CD4-positive, alpha-beta T cell (primary cell): ENCODE measurements at regions of chr1 and their contacts with region 1.

Region 1: DNA sequence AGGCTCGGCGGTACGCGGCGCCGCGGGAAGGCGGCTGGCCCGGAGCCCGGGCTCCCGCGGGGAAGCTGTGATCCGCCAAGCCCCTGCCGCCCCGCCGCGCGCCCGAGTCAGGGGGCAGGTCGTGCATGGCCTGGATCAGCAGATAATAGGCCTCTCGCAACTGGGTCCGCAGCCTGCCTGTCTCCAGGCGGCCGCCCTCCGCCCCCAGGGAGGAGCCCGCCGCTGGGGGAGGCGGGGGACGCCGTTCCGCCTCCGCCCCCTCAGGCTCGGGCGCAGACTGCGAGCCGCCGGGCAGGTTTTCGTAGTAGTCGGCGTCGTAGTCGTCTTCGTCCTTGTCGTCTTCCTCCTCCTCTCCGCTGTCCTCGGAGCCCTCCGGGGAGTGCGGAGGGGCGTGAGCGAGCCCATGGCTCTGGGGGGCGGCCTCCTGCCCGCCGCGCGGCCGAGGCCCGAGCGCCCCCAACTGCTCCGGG is at the start of gene SYDE2:
- DNase-seq: peak; percentile 65 to 92 (median 79)
- ATAC-seq: peak; percentile 81
- H3K4me3 ChIP-seq: peak within 1 kb of the TSS; percentile 66
- H3K4me3 Mint-ChIP-seq: peak within 1 kb of the TSS; percentile 98
- H3K27ac ChIP-seq: peak within 1 kb of the TSS; percentile 38 to 95
- H3K27ac Mint-ChIP-seq: peak within 1 kb of the TSS; percentile 97
- H3K4me1 ChIP-seq: peaks cover 16% of the 10 kb centered on the region
- H3K4me1 Mint-ChIP-seq: peaks cover 47% of the 10 kb centered on the region
- H3K27me3 ChIP-seq: no peaks in the 10 kb centered on the region
- H3K27me3 Mint-ChIP-seq: peaks cover 36% of the 10 kb centered on the region
- CTCF ChIP-seq: no peak
- total RNA-seq, gene SYDE2: 6.4 to 6.9 TPM

Region 2: DNA sequence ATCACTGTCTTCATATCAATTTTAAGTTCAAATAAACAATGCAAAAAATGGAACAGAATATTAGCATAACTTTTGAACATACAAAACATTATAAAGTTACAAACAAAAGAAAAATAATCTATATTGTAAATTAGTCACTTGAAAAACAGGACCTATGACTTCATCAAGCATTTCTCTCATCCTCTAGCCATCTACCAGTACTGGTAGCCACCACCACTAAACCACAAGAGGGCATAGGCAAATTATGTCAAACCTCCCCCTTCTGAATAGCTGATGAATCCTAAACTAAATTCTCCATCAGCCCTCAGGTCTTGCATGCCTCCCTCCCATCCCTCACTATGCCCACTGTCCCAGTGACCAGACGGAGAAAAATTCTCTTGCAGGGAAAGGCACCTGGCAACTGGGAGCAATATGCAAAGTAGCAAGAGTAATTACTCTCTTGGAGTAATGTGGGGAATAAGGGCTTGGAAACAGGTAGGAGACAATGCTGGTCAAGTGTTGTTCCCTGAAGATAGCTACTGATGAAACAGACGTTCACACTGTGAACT is 547.7 kb before region 1 on chr1:
- CTCF ChIA-PET with region 1: no interaction called
- POLR2A ChIA-PET with region 1: no interaction called
- intact Hi-C with region 1: no loop called
- DNase-seq: peak in 2 of 14 experiments; percentile 5 to 11
- ATAC-seq: no peak
- H3K4me3 ChIP-seq: no peak overlapping the region
- H3K4me3 Mint-ChIP-seq: no peak overlapping the region
- H3K27ac ChIP-seq: no peak overlapping the region
- H3K27ac Mint-ChIP-seq: no peak overlapping the region
- H3K4me1 ChIP-seq: no peaks in the 10 kb centered on the region
- H3K4me1 Mint-ChIP-seq: no peaks in the 10 kb centered on the region
- H3K27me3 ChIP-seq: no peaks in the 10 kb centered on the region
- H3K27me3 Mint-ChIP-seq: no peaks in the 10 kb centered on the region
- CTCF ChIP-seq: no peak

Region 3: DNA sequence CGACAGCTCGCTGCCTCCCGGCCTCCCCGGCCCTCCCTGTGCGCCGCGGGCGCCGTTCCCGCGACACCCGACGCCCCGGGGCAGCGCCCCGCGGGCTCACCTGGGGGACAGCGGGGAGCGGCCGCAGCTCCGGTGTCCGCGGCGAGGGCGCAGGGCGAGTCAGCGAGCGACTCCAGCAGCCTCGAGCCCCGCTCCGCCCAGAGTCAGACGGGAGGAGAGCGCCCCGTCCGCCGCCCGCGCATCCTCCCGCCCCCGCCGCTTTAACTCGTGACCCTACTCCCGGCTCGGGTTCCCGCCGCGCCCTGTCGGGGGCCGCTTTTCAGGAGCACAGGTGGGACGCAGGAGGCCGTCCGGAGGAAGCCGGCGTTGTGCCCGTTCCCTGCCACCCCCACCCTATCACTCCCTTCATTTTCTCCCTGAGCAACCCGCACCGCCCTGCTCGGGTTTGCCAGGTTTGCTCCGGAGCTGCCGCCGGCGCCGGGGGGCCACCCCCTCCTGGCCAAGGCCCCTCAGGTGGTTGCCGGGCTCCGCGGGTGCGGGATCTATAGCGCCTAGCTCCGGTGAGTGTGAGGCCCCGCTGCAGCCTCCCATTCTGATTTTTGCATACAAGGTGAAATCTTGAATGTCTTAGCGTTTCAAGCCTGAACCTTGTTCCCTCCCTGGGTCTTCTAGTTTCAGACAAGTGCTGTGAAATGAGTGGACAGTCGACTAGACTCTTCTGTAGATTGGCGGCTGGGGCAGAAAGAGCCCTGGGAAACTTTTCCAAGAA is 152.4 kb before region 1 on chr1 and contains the start of gene MCOLN3:
- CTCF ChIA-PET with region 1: no interaction called
- POLR2A ChIA-PET with region 1: no interaction called
- intact Hi-C with region 1: loop called in 1 of 2 experiments (anchors 5 kb)
- DNase-seq: peak in 11 of 14 experiments; percentile 14 to 60 (median 36)
- ATAC-seq: peak; percentile 63
- H3K4me3 ChIP-seq: peak within 1 kb of the TSS; percentile 49
- H3K4me3 Mint-ChIP-seq: peak within 1 kb of the TSS; percentile 72
- H3K27ac ChIP-seq: no peak within 1 kb of the TSS
- H3K27ac Mint-ChIP-seq: no peak within 1 kb of the TSS
- H3K4me1 ChIP-seq: peaks cover 26% of the 10 kb centered on the region
- H3K4me1 Mint-ChIP-seq: peaks cover 33% of the 10 kb centered on the region
- H3K27me3 ChIP-seq: peaks cover 33 to 56% of the 10 kb centered on the region in 2 experiments
- H3K27me3 Mint-ChIP-seq: peaks cover 66% of the 10 kb centered on the region
- CTCF ChIP-seq: no peak
- total RNA-seq, gene MCOLN3: 0.14 to 0.22 TPM

Region 4: GRCh38 chr1:85061711-85062424 is 139.0 kb before region 1 on chr1:
- CTCF ChIA-PET with region 1: no interaction called
- POLR2A ChIA-PET with region 1: interaction called, 3 read pairs
- intact Hi-C with region 1: loop called in 1 of 2 experiments (anchors 5 kb)
- DNase-seq: peak; percentile 69 to 95 (median 73)
- ATAC-seq: peak; percentile 99
- H3K4me3 ChIP-seq: peak overlapping the region; percentile 50
- H3K4me3 Mint-ChIP-seq: peak overlapping the region; percentile 89
- H3K27ac ChIP-seq: no peak overlapping the region
- H3K27ac Mint-ChIP-seq: peak overlapping the region; percentile 43
- H3K4me1 ChIP-seq: peaks cover 10% of the 10 kb centered on the region
- H3K4me1 Mint-ChIP-seq: peaks cover 10% of the 10 kb centered on the region
- H3K27me3 ChIP-seq: peaks cover 0 to 3% of the 10 kb centered on the region in 2 experiments
- H3K27me3 Mint-ChIP-seq: peaks cover 28% of the 10 kb centered on the region
- CTCF ChIP-seq: no peak

Region 5: DNA sequence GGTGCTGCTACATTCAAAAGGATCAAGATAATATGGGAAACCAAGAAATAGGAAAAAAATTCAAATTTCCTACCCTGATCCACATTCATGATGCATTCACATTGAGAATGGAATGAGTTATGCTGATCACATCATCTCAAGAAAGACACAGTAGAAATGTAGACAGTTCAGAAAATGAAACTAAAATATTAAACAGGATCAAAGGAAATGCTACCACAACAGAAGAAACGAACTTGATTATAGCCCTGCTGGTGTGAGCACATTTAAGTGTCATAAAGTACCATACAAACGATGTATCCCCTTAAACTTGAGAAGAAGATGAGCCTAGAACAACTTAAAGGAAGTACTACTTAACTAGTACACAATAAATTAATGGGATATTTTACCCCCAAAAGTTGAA is 21.4 kb before region 1 on chr1:
- CTCF ChIA-PET with region 1: interaction called, 3 read pairs
- POLR2A ChIA-PET with region 1: interaction called, 7 read pairs
- intact Hi-C with region 1: loop called in 1 of 2 experiments (anchors 2 kb)
- DNase-seq: peak in 3 of 14 experiments; percentile 59 to 77 (median 59)
- ATAC-seq: peak; percentile 95
- H3K4me3 ChIP-seq: peak overlapping the region; percentile 2
- H3K4me3 Mint-ChIP-seq: peak overlapping the region; percentile 64
- H3K27ac ChIP-seq: no peak overlapping the region
- H3K27ac Mint-ChIP-seq: peak overlapping the region; percentile 5
- H3K4me1 ChIP-seq: no peaks in the 10 kb centered on the region
- H3K4me1 Mint-ChIP-seq: peaks cover 14% of the 10 kb centered on the region
- H3K27me3 ChIP-seq: no peaks in the 10 kb centered on the region
- H3K27me3 Mint-ChIP-seq: no peaks in the 10 kb centered on the region
- CTCF ChIP-seq: no peak

Region 6: GRCh38 chr1:85259118-85259911 is 58.4 kb after region 1 on chr1 and contains the start of gene C1orf52:
- CTCF ChIA-PET with region 1: interaction called, 12 read pairs
- POLR2A ChIA-PET with region 1: interaction called, 15 read pairs
- intact Hi-C with region 1: loop called (anchors 2 kb)
- DNase-seq: peak; percentile 92 to 99 (median 96)
- ATAC-seq: peak; percentile 93
- H3K4me3 ChIP-seq: peak within 1 kb of the TSS; percentile 88
- H3K4me3 Mint-ChIP-seq: peak within 1 kb of the TSS; percentile 99
- H3K27ac ChIP-seq: peak within 1 kb of the TSS; percentile 47 to 81
- H3K27ac Mint-ChIP-seq: peak within 1 kb of the TSS; percentile 95
- H3K4me1 ChIP-seq: peaks cover 21% of the 10 kb centered on the region
- H3K4me1 Mint-ChIP-seq: peaks cover 41% of the 10 kb centered on the region
- H3K27me3 ChIP-seq: no peaks in the 10 kb centered on the region
- H3K27me3 Mint-ChIP-seq: no peaks in the 10 kb centered on the region
- CTCF ChIP-seq: peak; percentile 97
- total RNA-seq, gene C1orf52: 62.4 to 66.6 TPM

Region 7: DNA sequence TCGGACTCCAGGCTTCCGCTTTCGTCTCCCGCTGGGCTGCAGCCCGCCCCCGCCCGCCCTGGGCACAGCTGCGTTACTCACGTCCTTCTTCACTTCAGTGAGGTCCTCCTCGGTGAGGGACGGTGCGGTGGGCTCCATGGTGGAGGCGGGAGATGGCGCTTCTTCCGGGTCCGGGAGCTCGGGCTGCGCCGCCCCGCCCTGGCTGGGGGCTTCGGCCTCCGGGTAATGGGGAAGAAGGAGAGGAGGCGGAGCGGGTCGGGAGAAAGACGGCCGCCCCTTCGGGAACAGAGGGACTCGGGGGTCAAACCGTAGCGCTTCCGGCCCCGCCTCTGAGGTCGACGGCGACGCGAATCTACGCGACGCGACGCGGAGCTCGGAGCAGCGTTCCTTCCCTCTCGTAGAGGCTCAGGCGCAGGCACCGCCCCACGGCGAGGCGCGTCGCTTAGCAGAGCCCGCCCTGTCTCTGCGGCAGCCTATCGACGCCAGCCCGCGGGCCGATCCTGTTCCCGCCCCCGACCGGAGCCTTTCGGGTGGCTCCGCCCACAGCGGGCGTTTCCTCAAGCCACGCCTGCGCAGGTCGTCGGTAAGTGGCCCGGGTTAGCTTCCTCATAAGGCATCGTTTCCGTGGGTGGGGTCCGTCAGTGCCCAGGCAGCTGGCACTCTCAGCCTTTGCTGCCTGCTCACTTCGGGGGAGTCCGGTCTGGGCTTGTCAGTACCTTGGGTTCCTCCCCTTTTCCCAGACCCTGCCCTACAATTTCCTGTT is 75.5 kb after region 1 on chr1 and contains the start of gene BCL10:
- CTCF ChIA-PET with region 1: no interaction called
- POLR2A ChIA-PET with region 1: interaction called, 38 read pairs
- intact Hi-C with region 1: loop called (anchors 1 to 5 kb)
- DNase-seq: peak; percentile 93 to 99 (median 96)
- ATAC-seq: peak; percentile 95
- H3K4me3 ChIP-seq: peak within 1 kb of the TSS; percentile 94
- H3K4me3 Mint-ChIP-seq: peak within 1 kb of the TSS; percentile 92
- H3K27ac ChIP-seq: peak within 1 kb of the TSS; percentile 90 to 99
- H3K27ac Mint-ChIP-seq: peak within 1 kb of the TSS; percentile 95
- H3K4me1 ChIP-seq: peaks cover 28% of the 10 kb centered on the region
- H3K4me1 Mint-ChIP-seq: peaks cover 57% of the 10 kb centered on the region
- H3K27me3 ChIP-seq: no peaks in the 10 kb centered on the region
- H3K27me3 Mint-ChIP-seq: no peaks in the 10 kb centered on the region
- CTCF ChIP-seq: no peak
- total RNA-seq, gene BCL10: 50.0 to 52.0 TPM

Region 8: DNA sequence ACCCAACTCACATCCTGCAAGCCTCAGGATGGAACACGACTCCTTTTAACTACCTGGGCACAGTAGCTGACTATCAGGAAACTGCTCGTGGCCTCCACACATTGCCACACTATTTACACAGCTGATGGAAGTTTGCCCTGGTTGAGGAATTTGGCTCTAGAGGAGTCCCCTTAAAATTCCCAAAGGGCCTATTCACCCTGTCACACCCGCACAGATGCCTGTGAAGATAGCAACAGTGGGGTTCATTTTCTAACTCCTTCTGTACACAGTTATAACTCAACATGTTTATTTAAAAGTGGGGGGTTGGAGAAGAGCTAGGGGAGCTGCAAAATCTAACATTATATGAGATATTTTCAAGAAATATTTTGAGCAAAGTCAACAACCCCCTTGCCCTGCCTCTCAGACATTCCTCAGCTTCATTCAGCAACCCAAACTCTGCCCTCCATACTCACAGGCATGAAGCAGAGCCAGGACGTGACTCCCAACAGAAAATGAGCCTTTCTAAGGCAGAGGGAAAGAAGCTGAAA is 343.8 kb after region 1 on chr1:
- CTCF ChIA-PET with region 1: no interaction called
- POLR2A ChIA-PET with region 1: no interaction called
- intact Hi-C with region 1: no loop called
- DNase-seq: no peak
- ATAC-seq: no peak
- H3K4me3 ChIP-seq: no peak overlapping the region
- H3K4me3 Mint-ChIP-seq: no peak overlapping the region
- H3K27ac ChIP-seq: no peak overlapping the region
- H3K27ac Mint-ChIP-seq: no peak overlapping the region
- H3K4me1 ChIP-seq: no peaks in the 10 kb centered on the region
- H3K4me1 Mint-ChIP-seq: no peaks in the 10 kb centered on the region
- H3K27me3 ChIP-seq: peaks cover 4% of the 10 kb centered on the region in 2 experiments
- H3K27me3 Mint-ChIP-seq: peaks cover 9% of the 10 kb centered on the region
- CTCF ChIP-seq: no peak